AG04449 (cell line): ENCODE measurements at regions of chr1 and their contacts with region 1.

Region 1: DNA sequence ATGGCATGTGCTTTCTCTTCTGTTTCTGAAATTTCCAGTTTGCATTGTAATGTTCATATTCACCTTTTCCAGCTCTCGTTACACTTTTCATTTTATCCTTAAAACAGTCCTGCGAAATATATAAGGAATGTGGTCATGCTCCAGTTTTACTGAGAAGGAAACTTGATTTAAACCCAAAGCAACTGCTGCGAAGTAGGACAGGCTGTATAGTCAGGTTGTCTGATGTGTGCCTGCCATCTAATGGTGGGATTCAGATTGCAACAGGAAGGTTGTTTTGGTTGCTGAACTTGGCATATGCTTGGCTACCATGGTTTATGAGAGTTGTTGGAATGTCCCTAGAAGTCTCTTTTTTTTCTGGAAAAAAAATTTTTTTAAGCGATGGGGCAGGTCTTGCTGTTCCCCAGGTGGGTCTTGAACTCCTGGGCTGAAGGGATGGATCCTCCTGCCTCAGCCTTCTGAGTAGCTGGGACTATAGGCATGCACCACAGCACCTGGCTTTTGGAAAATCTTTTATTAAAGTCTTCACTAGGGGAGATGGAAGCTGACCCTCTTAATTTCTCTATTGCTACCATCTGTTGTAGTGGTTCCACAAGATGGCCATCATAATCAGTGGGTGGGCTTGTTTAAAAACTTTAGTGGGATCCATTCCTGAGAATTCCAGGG is 86.9 kb downstream of the UCK2 start:
- DNase-seq: no peak
- H3K4me3 ChIP-seq: no peak overlapping the region
- CTCF ChIP-seq: peak; percentile 80

Region 2: DNA sequence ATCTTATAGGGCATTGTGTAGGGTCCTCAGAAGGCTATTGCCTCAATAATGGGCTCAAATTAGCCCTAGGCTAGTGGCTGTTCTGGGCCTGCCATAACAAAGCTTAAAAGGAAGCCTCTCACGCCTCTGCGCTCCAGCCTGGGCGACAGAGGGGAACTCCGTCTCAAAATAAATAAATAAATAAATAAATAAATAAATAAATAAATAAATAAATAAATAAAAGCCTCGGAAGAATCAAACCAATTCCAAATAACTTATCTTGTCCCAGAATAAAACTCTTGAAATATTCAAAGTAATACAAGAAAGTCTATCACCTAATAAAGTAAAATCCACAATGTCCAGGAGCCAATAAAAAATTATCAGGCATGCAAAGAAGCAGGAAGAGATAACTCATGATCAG is 201.5 kb before region 1 on chr1:
- CTCF ChIA-PET with region 1: interaction called, 71 read pairs
- POLR2A ChIA-PET with region 1: no interaction called
- DNase-seq: no peak
- H3K4me3 ChIP-seq: no peak overlapping the region
- CTCF ChIP-seq: no peak

Region 3: DNA sequence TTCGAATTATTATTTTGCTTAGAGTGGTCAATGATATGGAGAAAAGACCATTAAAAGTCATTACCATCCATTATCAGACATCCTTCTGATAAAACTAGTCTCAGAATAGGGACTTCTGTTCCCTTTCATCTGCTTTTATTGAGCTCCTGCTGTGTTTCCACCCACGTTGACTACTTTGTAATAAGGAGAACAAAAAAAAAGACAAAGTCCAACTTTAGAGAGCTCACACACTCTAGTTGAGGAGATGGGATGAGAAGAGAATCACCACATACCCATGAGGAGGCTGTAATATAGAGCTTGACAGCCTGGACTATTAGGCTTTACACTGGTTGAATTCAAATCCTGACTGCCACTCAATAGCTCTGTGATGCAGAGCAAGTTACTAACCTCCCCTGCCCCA is 188.1 kb before region 1 on chr1:
- CTCF ChIA-PET with region 1: interaction called, 29 read pairs
- POLR2A ChIA-PET with region 1: no interaction called
- DNase-seq: no peak
- H3K4me3 ChIP-seq: no peak overlapping the region
- CTCF ChIP-seq: no peak

Region 4: DNA sequence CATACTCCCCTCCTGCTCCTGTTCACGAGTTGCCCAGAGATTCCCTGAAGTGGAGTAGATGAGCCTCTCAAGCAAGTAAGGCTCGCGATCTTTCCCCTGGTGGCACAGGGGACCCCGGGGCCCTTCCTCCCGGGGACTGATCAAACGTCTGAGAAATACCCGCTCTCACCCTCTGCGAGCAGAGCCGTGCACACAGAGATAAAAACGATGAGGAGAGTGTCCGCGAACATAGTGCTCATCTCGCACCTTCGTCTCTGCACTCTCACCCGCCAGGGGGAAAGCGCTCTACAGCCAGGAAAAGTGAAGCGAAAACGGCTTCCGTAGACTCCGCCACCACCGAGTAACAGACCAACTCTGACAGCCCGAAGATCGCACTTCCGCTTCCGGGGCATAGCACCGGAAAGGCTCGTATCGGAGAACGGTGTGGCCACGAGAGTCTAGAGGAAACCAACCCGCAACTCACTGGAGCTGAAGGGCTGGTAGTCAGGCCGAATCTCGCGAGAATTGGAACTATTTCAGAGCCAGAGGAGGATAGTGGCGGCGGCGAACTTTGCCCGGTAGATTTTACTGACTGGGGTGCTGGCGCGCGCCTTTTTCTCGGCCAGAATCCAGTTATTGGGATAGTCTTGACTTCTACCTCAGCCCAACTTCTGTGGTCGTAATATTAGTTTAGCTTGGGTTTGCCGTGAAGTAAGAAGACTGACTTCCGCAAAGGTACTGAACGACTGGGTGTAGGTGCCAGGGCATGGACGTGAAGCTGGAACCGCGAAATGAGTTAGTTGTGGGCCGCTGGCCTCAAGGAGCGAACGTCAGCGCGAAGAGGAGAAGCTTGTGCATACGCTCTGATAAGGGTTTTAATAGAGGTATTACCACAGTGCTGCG is 145.5 kb before region 1 on chr1 and contains the start of gene TMCO1:
- CTCF ChIA-PET with region 1: interaction called, 43 read pairs
- POLR2A ChIA-PET with region 1: no interaction called
- DNase-seq: peak; percentile 89
- H3K4me3 ChIP-seq: peak within 1 kb of the TSS; percentile 91
- CTCF ChIP-seq: peak; percentile 16

Region 5: DNA sequence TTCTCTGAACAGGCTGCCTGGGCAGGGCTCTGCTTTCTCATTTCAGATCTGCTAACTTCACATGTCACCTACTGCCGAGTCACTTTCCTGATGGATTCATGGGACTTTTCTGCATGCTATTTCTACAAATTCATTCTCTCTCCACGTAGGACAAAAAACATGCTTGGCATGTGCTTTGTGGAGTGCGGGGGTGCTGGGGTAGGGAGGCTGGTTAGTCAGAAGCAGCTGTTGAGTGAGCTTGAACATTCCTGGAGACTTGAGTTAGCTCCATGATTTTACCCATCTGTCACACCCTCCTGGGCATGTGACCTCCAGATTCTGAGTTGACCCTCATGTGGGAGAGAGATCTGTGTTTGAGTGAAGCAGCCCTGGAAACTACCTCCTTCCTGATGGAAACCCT is 15.4 kb before region 1 on chr1:
- CTCF ChIA-PET with region 1: interaction called, 40 read pairs
- POLR2A ChIA-PET with region 1: no interaction called
- DNase-seq: peak; percentile 98
- H3K4me3 ChIP-seq: no peak overlapping the region
- CTCF ChIP-seq: no peak